BJ (cell line): ENCODE measurements at regions of chr3 and their contacts with region 1.

Region 1: DNA sequence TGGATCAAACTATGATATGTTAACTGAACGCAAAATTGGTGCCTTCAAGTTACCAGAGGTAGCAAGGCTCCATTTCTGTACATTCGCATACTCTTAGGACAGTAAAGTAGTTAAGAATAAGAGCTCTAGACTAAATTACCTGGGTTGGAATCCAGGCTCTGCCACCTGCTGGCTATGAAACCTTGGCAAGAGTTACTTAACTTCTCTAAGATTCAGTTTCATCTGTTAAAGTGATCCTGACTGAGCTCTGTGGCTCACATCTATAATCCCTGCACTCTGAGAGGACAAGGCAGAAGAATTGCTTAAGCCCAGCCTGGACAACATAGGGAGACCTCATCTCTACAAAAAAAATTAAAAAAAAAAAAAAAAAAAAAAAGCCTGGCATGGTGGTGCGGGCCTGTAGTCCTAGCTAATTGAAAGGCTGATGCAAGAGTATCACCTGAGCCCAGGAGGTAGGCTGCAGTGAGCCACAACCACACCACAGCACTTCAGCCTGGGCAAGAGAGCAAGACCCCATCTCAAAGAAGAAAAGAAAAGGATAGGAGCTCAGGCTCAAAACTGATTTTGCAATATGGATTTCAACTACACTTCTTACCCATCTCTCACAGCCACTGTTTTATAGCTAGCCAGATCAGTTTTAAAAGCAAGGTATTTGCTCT is 21.3 kb downstream of the GSK3B start:
- DNase-seq: no peak
- H3K4me3 ChIP-seq: no peak overlapping the region
- H3K27me3 ChIP-seq: no peaks in the 10 kb centered on the region
- CTCF ChIP-seq: no peak

Region 2: GRCh38 chr3:119967353-119968006 is 105.5 kb before region 1 on chr3:
- CTCF ChIA-PET with region 1: no interaction called
- POLR2A ChIA-PET with region 1: no interaction called
- DNase-seq: no peak
- H3K4me3 ChIP-seq: no peak overlapping the region
- H3K27me3 ChIP-seq: no peaks in the 10 kb centered on the region
- CTCF ChIP-seq: no peak

Region 3: DNA sequence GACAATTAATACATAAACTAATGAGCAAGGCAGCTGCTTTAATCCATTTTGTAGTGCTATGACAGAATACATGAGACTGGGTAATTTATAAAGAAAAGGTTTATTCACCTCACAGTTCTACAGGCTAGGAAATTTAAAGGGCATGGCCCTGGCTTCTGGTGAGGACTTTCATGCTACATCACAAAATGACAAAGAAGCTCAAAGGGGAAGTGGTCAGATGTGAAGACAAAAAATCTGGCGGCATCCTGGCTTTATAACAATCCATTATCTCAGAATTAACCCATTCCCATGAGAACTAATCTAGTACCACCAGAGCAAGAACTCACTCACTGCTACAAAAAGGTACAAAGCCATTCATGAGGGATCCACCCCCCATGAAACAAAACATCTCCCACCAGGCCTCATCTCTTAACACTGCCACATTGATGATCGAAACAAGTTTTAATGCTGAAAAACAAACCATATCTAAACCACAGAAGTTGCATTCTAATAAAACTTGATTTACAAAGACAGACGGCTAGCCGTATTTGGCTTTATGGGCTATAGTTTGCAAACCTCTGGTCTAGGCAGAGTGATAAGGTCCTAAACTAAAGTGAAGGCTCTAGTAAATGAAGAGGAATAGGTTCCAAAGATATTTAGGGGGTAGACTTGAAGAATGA is 23.0 kb before region 1 on chr3:
- CTCF ChIA-PET with region 1: interaction called, 3 read pairs
- POLR2A ChIA-PET with region 1: interaction called, 11 read pairs
- DNase-seq: no peak
- H3K4me3 ChIP-seq: no peak overlapping the region
- H3K27me3 ChIP-seq: no peaks in the 10 kb centered on the region
- CTCF ChIP-seq: no peak